ENCODE measurements at regions of chr1 and their contacts with region 1.

Region 1: GRCh38 chr1:185681034-185681633 is 53.1 kb upstream of the HMCN1 start:
- H3K4me3 Mint-ChIP-seq: no peak overlapping the region
- H3K27ac Mint-ChIP-seq: no peak overlapping the region
- H3K4me1 Mint-ChIP-seq: peaks cover 24% of the 10 kb centered on the region
- H3K27me3 Mint-ChIP-seq: no peaks in the 10 kb centered on the region

Region 2: DNA sequence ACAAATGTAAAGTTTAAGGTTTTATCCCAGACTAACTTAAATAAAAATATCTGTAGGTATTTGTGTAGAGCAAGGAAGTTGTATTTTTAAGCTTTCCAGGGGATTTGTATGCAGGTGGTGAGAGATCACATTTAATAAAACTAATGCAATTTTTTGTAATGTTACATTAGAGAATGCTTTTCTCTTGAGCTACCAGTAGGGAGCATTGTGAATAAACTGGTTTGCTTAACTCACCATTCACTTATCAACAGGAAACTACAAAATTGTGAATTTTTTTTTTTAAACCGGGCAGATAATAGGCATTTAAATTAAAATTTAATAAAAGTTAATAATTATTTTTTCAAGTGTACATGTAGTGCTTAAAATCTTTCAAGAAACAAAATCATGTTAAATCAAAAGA is 442.7 kb before region 1 on chr1:
- intact Hi-C with region 1: loop called (anchors 5 kb)
- H3K4me3 Mint-ChIP-seq: no peak overlapping the region
- H3K27ac Mint-ChIP-seq: no peak overlapping the region
- H3K4me1 Mint-ChIP-seq: no peaks in the 10 kb centered on the region
- H3K27me3 Mint-ChIP-seq: no peaks in the 10 kb centered on the region

Region 3: DNA sequence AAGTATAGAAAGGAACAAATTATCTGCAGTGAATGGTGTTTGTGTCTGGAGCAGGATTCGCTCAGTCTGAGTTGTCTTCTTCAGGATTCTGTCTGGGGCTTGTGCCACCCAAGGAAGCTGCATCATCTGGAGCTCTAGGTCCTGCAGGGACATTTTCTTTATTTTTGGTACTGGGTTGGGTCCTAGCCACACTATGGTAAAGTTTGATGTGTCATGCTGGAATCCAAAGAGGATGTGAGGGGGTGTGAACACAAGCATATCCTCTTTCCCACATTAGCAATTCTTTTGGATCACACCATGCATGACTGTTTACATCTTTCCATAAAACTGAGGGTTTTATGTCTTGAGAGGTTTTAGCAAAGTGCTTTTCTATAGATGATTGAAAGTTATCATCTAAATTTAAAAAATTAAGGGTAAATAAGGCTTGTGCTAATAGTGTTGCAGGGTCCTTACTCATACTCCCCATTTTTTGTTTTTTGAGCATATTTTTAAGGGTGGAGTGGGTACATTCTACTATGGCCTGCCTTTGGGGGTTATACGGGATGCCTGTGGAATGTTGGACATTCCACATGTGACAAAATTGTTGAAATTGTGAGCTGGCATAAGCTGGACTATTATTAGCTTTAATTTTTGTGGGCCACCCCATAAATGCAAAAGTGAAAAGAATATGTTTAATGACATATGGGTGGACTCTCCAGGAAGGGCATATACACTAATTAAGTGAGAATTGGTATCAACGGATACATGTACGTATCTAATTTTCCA is 99.0 kb before region 1 on chr1:
- intact Hi-C with region 1: no loop called
- H3K4me3 Mint-ChIP-seq: no peak overlapping the region
- H3K27ac Mint-ChIP-seq: no peak overlapping the region
- H3K4me1 Mint-ChIP-seq: peaks cover 6% of the 10 kb centered on the region
- H3K27me3 Mint-ChIP-seq: no peaks in the 10 kb centered on the region

Region 4: GRCh38 chr1:185652348-185652747 is 28.8 kb before region 1 on chr1:
- intact Hi-C with region 1: loop called (anchors 2 kb)
- H3K4me3 Mint-ChIP-seq: no peak overlapping the region
- H3K27ac Mint-ChIP-seq: no peak overlapping the region
- H3K4me1 Mint-ChIP-seq: no peaks in the 10 kb centered on the region
- H3K27me3 Mint-ChIP-seq: no peaks in the 10 kb centered on the region

Measured in dendritic cell treated with granulocyte-macrophage colony-stimulating factor and Interleukin-4, amounts not matched to agents 40 ng/mL and 50 ng/mL, for 4 days (primary cell).